ENCODE measurements at regions of chr16 and their contacts with region 1.

Region 1: DNA sequence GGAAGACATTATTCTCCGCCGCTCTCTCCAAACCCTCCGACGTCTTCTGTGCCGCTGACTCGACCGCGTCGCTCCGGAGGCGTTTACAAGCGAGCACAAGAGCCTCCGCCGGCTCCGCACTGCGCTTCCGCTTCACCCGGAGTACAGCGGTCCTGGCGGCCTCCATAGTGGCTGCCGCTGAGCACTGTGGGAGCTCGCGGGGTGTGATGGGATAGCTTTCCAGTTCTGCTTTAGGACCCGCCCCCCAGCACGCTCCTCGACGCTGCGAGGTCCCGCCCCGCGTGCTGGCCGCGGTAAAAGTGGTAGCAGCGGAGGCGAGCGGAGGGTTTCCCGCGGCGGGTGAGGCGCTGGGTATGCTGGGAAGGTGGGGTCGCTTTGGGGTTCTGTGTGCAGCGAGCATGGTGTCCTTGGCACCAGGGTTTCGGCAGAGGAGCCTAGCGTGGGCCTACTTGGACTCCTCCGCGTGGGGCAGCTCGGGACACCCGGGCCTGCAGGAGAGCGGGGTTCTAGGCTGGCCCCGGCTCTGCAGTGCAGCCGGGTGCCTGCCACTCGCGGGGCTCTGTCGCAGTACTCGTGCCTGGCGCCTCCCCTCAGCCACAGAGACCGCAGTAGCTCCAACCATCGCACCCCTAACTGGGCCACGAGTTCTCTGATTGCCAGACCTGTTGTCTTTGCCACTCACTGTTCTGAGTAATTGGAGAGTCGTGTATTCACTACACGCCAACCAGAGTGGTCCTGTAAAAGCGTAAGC is at the starts of genes PRMT7 and SLC7A6OS:
- DNase-seq: peak; percentile 77 to 94 (median 92)
- ATAC-seq: peak; percentile 99
- H3K4me3 ChIP-seq: peak within 1 kb of the TSS; percentile 99
- H3K4me3 Mint-ChIP-seq: peak within 1 kb of the TSS; percentile 88 to 100 (median 98)
- H3K27ac ChIP-seq: peak within 1 kb of the TSS; percentile 91
- H3K27ac Mint-ChIP-seq: peak within 1 kb of the TSS; percentile 77 to 99 (median 96)
- H3K4me1 ChIP-seq: peaks cover 25 to 32% of the 10 kb centered on the region in 2 donors
- H3K4me1 Mint-ChIP-seq: peaks cover 33 to 69% (median 59%) of the 10 kb centered on the region in 7 donors
- H3K27me3 ChIP-seq: no peaks in the 10 kb centered on the region
- H3K27me3 Mint-ChIP-seq: no peaks in the 10 kb centered on the region
- total RNA-seq, gene PRMT7: 60.8 to 95.1 (median 89.4) TPM
- total RNA-seq, gene SLC7A6OS: 31.4 to 50.3 (median 34.8) TPM

Region 2: DNA sequence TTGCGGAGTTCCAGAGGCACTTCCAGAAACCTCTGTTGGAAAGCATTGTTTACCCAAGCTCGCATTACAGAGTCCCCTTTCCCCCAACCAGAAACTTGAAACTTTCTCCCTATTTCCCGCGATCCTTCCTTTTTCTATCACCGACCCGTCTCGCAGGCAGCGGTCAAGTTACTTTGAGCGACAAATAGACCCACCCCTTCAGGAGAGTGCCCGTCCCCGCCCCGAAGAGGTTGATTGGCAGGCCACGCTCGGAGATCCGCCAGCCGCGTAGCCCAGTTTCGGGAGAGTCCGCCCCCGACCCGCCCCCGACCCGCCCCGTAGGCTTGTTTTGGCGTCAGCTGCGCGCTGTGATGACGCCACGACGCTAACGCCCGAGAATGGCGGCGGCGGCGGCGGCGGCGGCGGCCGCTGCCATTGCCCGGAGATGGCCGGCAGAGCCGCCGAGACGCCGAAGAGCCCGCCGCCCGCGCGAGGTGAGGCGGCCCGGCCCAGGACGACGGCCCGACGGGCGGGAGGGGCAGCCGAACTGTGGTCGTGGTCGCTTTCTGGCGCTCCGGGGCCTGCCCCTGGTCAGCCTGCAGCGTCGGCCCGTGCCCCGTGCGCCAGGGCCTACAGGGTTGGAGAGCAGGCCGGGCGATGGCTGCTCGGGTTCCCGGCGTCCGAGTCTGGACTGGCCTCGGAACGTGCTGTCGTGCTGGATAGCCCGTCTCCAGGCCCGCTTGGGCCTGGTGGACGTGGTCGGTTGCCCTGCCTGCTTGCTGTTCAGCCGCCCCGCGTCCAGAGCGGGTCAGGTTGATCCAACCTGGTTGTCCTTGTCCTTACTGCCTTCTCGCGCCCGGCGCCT is 417.8 kb before region 1 on chr16 and contains the start of gene PSKH1:
- CTCF ChIA-PET with region 1: no interaction called
- POLR2A ChIA-PET with region 1: no interaction called
- intact Hi-C with region 1: loop called in 1 of 2 experiments (anchors 2 kb)
- DNase-seq: peak; percentile 77 to 92 (median 84)
- ATAC-seq: peak; percentile 99
- H3K4me3 ChIP-seq: peak within 1 kb of the TSS; percentile 89
- H3K4me3 Mint-ChIP-seq: peak within 1 kb of the TSS; percentile 86 to 97 (median 94)
- H3K27ac ChIP-seq: peak within 1 kb of the TSS; percentile 94
- H3K27ac Mint-ChIP-seq: peak within 1 kb of the TSS; percentile 85 to 98 (median 97)
- H3K4me1 ChIP-seq: peaks cover 12 to 15% of the 10 kb centered on the region in 2 donors
- H3K4me1 Mint-ChIP-seq: peaks cover 22 to 48% (median 35%) of the 10 kb centered on the region in 7 donors
- H3K27me3 ChIP-seq: no peaks in the 10 kb centered on the region
- H3K27me3 Mint-ChIP-seq: no peaks in the 10 kb centered on the region
- total RNA-seq, gene PSKH1: 18.0 to 28.5 (median 23.3) TPM

Region 3: GRCh38 chr16:68244903-68245853 is 65.8 kb before region 1 on chr16 and contains the start of gene PLA2G15:
- CTCF ChIA-PET with region 1: interaction called, 4 read pairs
- POLR2A ChIA-PET with region 1: interaction called, 5 read pairs
- intact Hi-C with region 1: loop called (anchors 1 kb)
- DNase-seq: peak; percentile 89 to 96 (median 94)
- ATAC-seq: peak; percentile 99
- H3K4me3 ChIP-seq: peak within 1 kb of the TSS; percentile 99
- H3K4me3 Mint-ChIP-seq: peak within 1 kb of the TSS; percentile 91 to 100 (median 98)
- H3K27ac ChIP-seq: peak within 1 kb of the TSS; percentile 68
- H3K27ac Mint-ChIP-seq: peak within 1 kb of the TSS; percentile 61 to 94 (median 86)
- H3K4me1 ChIP-seq: peaks cover 13 to 14% of the 10 kb centered on the region in 2 donors
- H3K4me1 Mint-ChIP-seq: peaks cover 8 to 33% (median 28%) of the 10 kb centered on the region in 7 donors
- H3K27me3 ChIP-seq: no peaks in the 10 kb centered on the region
- H3K27me3 Mint-ChIP-seq: peaks cover 0 to 2% (median 0%) of the 10 kb centered on the region in 5 donors
- total RNA-seq, gene PLA2G15: 8.5 to 16.8 (median 9.9) TPM

Region 4: DNA sequence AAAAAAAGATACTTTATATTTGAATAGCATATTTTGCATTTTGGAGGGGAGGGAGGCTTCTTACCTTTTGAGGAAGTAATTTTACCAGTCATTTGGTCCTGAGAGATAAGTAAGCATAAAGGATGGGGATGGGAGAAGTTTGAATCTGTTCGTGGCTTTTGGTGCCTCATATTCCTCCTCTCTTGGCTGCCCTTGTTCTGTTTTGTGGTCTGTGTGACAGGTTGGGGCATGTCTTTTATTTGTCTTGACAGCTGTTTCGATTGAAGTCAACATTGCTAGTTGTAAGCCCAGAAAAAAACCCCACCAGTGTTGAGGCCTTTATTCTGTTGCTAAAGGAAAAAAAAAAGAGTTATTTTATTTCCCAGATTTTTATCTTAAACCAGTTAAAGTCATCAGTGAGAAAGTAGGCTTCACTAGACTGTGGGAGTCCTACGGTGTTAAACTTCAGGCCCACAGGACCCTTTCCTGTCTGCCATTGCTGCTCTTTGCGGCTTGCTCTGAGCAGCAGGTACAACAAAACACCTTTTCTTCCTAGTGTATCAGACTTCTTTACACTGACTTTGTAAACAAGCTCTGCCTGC is 35.2 kb before region 1 on chr16:
- CTCF ChIA-PET with region 1: interaction called, 6 read pairs
- POLR2A ChIA-PET with region 1: interaction called, 22 read pairs
- intact Hi-C with region 1: loop called in 1 of 2 experiments (anchors 1 kb)
- DNase-seq: peak in 7 of 9 donors; percentile 68 to 84 (median 83)
- ATAC-seq: peak; percentile 86
- H3K4me3 ChIP-seq: peak overlapping the region; percentile 38
- H3K4me3 Mint-ChIP-seq: peak overlapping the region; percentile 71 to 100 (median 80)
- H3K27ac ChIP-seq: peak overlapping the region; percentile 83
- H3K27ac Mint-ChIP-seq: peak overlapping the region; percentile 89 to 98 (median 97)
- H3K4me1 ChIP-seq: peaks cover 58 to 83% of the 10 kb centered on the region in 2 donors
- H3K4me1 Mint-ChIP-seq: peaks cover 40 to 84% (median 74%) of the 10 kb centered on the region in 7 donors
- H3K27me3 ChIP-seq: no peaks in the 10 kb centered on the region
- H3K27me3 Mint-ChIP-seq: no peaks in the 10 kb centered on the region

Region 5: GRCh38 chr16:68289621-68290329 is 21.2 kb before region 1 on chr16:
- CTCF ChIA-PET with region 1: interaction called, 5 read pairs
- POLR2A ChIA-PET with region 1: interaction called, 90 read pairs
- intact Hi-C with region 1: loop called (anchors 1 kb)
- DNase-seq: peak in 6 of 9 donors; percentile 20 to 57 (median 52)
- ATAC-seq: peak; percentile 75
- H3K4me3 ChIP-seq: peak overlapping the region; percentile 2
- H3K4me3 Mint-ChIP-seq: peak overlapping the region; percentile 43 to 87 (median 68)
- H3K27ac ChIP-seq: peak overlapping the region; percentile 68
- H3K27ac Mint-ChIP-seq: peak overlapping the region; percentile 84 to 95 (median 90)
- H3K4me1 ChIP-seq: peaks cover 76 to 83% of the 10 kb centered on the region in 2 donors
- H3K4me1 Mint-ChIP-seq: peaks cover 70 to 97% (median 87%) of the 10 kb centered on the region in 7 donors
- H3K27me3 ChIP-seq: no peaks in the 10 kb centered on the region
- H3K27me3 Mint-ChIP-seq: no peaks in the 10 kb centered on the region

Region 6: GRCh38 chr16:68328151-68328859 is 17.4 kb after region 1 on chr16:
- CTCF ChIA-PET with region 1: interaction called, 9 read pairs
- POLR2A ChIA-PET with region 1: interaction called, 9 read pairs
- intact Hi-C with region 1: loop called (anchors 1 kb)
- DNase-seq: peak; percentile 52 to 81 (median 77)
- ATAC-seq: peak; percentile 99
- H3K4me3 ChIP-seq: no peak overlapping the region
- H3K4me3 Mint-ChIP-seq: no peak overlapping the region
- H3K27ac ChIP-seq: no peak overlapping the region
- H3K27ac Mint-ChIP-seq: peak overlapping the region in 4 of 9 donors; percentile 0 to 57 (median 9)
- H3K4me1 ChIP-seq: peaks cover 0 to 16% of the 10 kb centered on the region in 2 donors
- H3K4me1 Mint-ChIP-seq: peaks cover 16 to 28% (median 19%) of the 10 kb centered on the region in 7 donors
- H3K27me3 ChIP-seq: no peaks in the 10 kb centered on the region
- H3K27me3 Mint-ChIP-seq: no peaks in the 10 kb centered on the region

Region 7: DNA sequence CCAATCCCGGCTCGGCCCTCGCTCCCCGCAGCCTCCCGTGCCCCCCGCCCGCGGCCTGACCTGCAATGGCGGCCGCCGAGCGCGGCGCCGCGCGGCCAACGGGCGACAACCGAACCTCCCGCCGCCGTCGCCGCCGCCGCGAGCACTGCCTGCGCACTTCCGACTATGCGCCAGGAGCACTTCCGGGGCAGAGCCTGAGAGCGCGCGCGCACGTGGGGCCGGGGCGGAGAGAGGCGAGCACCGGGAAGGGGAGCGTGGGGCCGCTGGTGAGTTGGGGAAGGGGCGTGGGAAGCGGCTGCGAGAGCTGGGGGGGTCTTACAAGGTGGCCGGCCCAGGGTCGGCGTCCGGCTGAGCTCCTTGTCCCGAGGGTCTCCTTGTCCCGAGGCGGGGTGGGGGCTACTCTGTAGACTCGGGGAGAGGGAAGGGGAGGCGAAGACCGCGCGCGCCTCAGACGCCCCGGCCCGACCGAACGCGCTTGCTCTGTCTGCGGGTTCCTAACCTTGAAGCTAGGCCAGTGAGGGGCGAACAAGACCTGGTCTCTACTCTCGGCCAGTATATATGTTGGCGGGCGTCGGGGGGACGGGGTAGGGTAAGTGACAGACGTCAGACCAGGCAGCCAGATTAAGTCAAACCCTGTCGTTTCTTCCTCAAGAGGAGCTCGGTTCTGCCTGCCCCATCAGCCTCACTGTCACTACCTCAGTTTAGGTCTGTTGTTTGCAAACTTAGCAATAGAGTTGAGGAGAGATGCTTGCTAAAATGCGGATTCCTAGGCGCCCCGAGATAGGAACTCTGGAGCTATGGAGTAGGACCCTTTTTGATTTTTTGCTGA is 821.7 kb after region 1 on chr16 and contains the starts of genes CHTF8 and UTP4:
- CTCF ChIA-PET with region 1: no interaction called
- POLR2A ChIA-PET with region 1: no interaction called
- intact Hi-C with region 1: loop called in 1 of 2 experiments (anchors 1 kb)
- DNase-seq: peak; percentile 81 to 91 (median 87)
- ATAC-seq: peak; percentile 95
- H3K4me3 ChIP-seq: peak within 1 kb of the TSS; percentile 80
- H3K4me3 Mint-ChIP-seq: peak within 1 kb of the TSS; percentile 91 to 97 (median 94)
- H3K27ac ChIP-seq: peak within 1 kb of the TSS; percentile 88
- H3K27ac Mint-ChIP-seq: peak within 1 kb of the TSS; percentile 85 to 97 (median 95)
- H3K4me1 ChIP-seq: peaks cover 12 to 23% of the 10 kb centered on the region in 2 donors
- H3K4me1 Mint-ChIP-seq: peaks cover 16 to 71% (median 61%) of the 10 kb centered on the region in 7 donors
- H3K27me3 ChIP-seq: no peaks in the 10 kb centered on the region
- H3K27me3 Mint-ChIP-seq: no peaks in the 10 kb centered on the region
- total RNA-seq, gene CHTF8: 53.3 to 142 (median 133) TPM
- total RNA-seq, gene UTP4: 31.9 to 56.5 (median 35.1) TPM

Measured in naive thymus-derived CD4-positive, alpha-beta T cell (primary cell).